Activated T-helper 2 cell treated with anti-CD3 and anti-CD28 coated beads, Interferon-gamma antibody, Interleukin-2, Interleukin-4, amounts not matched to agents 10 μg/mL and 5 μg/mL and 100 μg/mL, durations not matched to agents 14 hours and 24 hours and 36 hours (primary cell): ENCODE measurements at regions of chr2 and their contacts with region 1.

Region 1: GRCh38 chr2:130727286-130728018 is 1.4 kb upstream of the GPR148 start:
- DNase-seq: peak; percentile 87
- H3K4me3 Mint-ChIP-seq: peak overlapping the region; percentile 75
- H3K27ac Mint-ChIP-seq: peak overlapping the region; percentile 34
- H3K4me1 Mint-ChIP-seq: peaks cover 7% of the 10 kb centered on the region
- H3K27me3 Mint-ChIP-seq: peaks cover 12% of the 10 kb centered on the region

Region 2: DNA sequence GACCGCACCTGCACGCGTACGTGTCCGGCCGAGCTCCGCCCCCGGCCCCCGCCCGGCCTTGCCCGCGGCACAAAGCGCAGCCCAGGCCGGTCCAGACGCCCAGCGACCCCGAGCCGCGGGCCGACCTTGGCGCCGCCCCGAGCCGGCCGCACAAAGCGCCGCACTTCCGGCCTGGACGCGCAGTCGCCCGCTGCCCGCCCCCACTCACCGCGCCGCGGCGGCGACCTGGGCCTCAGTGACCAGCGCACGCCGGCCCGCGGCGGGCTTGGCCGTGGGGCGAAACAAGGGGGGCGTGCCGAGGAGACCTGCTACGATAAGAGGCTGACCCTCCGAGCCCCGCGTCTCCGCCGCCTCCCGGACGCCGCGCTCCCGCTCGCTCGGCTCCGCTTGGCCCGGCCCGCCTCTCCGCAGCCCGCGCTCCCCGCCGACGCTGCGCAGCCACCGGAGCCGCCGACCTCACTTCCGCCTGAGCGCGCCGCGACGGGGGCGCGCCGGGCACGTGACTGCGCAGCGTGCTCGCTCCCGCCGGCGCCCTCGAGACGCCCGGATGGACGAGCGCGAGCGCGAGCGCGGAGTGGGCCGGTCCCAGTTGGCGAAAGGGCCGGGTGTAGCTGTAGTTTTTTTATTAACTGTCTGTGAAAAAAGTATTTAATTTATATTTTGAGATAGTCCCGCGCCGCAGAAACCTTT is 365.7 kb after region 1 on chr2 and contains the start of gene FAM168B:
- intact Hi-C with region 1: loop called (anchors 10 kb)
- DNase-seq: peak; percentile 87
- H3K4me3 Mint-ChIP-seq: peak within 1 kb of the TSS; percentile 90
- H3K27ac Mint-ChIP-seq: peak within 1 kb of the TSS; percentile 82
- H3K4me1 Mint-ChIP-seq: peaks cover 12% of the 10 kb centered on the region
- H3K27me3 Mint-ChIP-seq: no peaks in the 10 kb centered on the region
- total RNA-seq, gene FAM168B: 69.0 and 70.3 TPM in 2 replicates